Activated CD4-positive, alpha-beta T cell treated with anti-CD3 and anti-CD28 coated beads, Interleukin-2, amount 10 ng/mL, durations not matched to agents 24 days and 14 days (primary cell): ENCODE measurements at regions of chr3 and their contacts with region 1.

Region 1: DNA sequence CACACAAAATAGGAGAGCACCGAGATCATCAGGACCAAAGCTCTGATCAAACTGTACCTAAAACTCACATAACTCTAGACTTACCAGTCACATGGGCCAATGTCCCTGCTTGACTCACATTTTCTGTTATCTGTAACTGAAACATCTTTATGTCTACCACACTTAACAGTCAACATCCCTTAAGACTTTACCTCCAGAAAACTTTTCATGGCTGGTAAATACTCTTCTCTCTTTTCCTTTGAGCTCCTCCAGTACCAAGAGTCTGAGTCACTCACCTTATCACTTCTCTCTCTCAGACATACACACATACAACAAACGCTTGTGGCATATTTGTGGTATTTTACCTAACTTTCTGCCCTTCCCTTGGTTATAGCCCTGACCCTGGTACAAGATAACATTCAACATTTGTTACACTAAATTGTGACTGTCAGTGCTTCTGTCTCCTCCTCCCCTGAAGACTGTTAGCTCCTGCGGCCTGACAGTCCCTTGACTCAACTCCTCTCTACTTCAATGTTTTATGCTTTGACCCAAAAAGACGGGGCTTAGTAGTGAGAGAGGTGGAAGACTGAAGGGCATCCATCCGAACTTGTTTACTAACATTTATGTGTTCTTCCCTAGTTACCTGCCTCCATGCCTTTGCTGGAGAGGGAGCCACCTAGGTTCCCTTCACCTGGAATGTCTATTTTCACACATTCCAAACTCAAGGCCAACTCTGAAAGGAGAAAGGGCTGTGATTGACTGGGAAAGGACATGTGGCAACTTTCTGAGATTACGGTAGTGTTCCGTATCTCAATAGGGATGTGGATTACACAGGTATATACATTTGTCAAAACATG is 3.7 kb upstream of the EFHB start:
- DNase-seq: peak; percentile 56
- H3K4me3 Mint-ChIP-seq: peak overlapping the region; percentile 18
- H3K27ac Mint-ChIP-seq: peak overlapping the region; percentile 85
- H3K4me1 Mint-ChIP-seq: peaks cover 34% of the 10 kb centered on the region
- H3K27me3 Mint-ChIP-seq: no peaks in the 10 kb centered on the region

Region 2: DNA sequence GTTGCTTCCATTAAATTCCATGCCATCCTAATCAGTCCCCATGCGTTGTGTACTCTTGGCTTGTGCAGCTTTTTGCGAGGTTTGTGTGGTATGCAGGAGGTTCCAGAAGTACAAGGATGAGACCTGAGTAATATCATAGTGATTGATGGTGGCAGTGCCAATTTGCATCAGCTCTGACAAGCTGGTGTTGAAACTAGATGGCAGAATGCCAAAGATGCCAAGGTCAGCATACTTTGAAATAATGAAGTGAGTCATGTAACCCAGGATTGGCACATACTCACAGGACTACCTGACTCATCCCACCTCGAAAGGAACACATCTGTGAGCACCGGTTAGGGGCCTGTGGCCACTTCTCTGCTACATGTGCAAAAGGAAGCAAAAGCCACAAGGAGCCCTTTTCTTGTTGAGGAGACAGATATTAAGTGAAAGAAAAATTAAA is 116.9 kb after region 1 on chr3:
- intact Hi-C with region 1: loop called (anchors 1 kb)
- DNase-seq: peak; percentile 84
- H3K4me3 Mint-ChIP-seq: no peak overlapping the region
- H3K27ac Mint-ChIP-seq: no peak overlapping the region
- H3K4me1 Mint-ChIP-seq: peaks cover 30% of the 10 kb centered on the region
- H3K27me3 Mint-ChIP-seq: no peaks in the 10 kb centered on the region